GM13977 (cell line): ENCODE measurements at regions of chr5 and their contacts with region 1.

Region 1: DNA sequence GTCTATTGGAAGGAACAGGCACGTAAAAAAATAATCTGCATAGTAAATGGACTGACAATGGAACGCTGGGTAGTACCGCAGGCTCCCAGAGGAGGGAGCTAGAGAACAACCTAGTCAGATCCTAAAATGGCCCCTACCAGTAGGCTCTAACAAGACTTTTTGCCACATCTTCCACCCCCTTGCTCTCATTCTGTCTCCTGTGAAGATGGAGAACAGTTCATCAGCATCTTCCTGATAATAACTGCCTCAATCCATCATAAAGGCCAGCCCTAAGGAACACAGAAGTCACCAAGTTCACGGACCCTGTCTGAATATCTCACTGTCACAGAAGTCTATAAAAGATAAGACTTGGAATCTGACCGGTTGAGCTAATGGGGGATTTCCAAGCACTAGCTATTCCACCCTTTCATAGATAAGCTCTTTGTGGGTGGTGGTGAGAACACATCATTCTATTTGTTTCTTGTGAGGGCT is 133.4 kb downstream of the SLC1A3 start:
- DNase-seq: peak; percentile 75
- CTCF ChIP-seq: peak; percentile 84

Region 2: DNA sequence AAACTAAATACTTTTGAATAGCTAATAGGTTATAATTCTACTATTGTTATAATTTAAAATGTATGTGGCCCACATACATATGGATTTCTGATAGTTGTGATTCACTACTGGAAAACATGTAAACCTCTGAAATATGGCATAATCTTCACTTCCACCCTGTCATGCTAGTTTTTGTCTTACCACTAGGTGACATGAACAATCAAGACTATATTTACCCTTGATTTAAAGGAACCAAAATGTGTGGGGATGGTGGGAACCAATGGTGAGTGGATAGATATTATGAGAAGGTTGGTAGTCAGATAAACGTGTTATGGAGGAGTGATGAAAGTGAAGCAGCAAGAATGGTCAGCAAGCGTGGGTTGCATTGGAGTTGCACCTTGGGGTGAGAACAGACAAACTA is 126.4 kb after region 1 on chr5:
- in situ Hi-C with region 1: loop called (anchors 5 kb)
- DNase-seq: no peak
- CTCF ChIP-seq: no peak

Region 3: DNA sequence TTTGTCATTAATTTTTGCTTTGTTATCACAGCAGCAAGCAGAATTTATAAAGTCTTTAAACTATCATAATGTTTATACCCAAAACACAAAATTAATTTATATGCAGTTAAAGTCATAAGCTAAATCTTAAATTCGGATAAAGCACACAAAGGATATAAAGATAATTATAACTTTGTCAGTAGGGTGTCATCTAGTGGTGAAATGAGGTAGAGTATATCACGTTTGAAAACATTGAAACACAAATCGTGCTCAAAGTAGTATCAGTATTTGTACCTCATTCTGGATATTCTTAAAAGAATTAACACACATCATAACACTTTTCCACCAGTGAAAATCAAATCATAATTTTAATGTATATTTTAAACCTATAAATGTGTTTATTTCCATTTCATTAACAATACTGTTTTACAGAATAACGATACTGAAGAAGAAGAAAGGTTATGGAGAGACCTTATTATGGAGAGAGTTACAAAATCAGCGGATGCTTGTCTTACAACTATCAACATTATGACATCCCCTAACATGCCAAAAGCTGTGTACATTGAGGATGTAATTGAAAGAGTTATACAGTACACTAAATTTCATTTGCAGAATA is 266.3 kb after region 1 on chr5:
- in situ Hi-C with region 1: loop called (anchors 10 kb)
- DNase-seq: peak; percentile 18
- CTCF ChIP-seq: peak; percentile 47

Region 4: GRCh38 chr5:37208883-37209797 is 469.4 kb after region 1 on chr5:
- in situ Hi-C with region 1: loop called (anchors 25 kb)
- DNase-seq: no peak
- CTCF ChIP-seq: no peak